ENCODE measurements at regions of chr1 and their contacts with region 1.

Region 1: GRCh38 chr1:205750138-205751035 is at the start of gene NUCKS1:
- DNase-seq: peak; percentile 97
- H3K4me3 Mint-ChIP-seq: peak within 1 kb of the TSS; percentile 87
- H3K27ac Mint-ChIP-seq: peak within 1 kb of the TSS; percentile 96
- H3K4me1 Mint-ChIP-seq: peaks cover 41% of the 10 kb centered on the region
- H3K27me3 Mint-ChIP-seq: no peaks in the 10 kb centered on the region
- total RNA-seq, gene NUCKS1: 163 to 185 TPM

Region 2: GRCh38 chr1:205554026-205554811 is 196.2 kb before region 1 on chr1:
- CTCF ChIA-PET with region 1: no interaction called
- POLR2A ChIA-PET with region 1: no interaction called
- DNase-seq: no peak
- H3K4me3 Mint-ChIP-seq: no peak overlapping the region
- H3K27ac Mint-ChIP-seq: no peak overlapping the region
- H3K4me1 Mint-ChIP-seq: no peaks in the 10 kb centered on the region
- H3K27me3 Mint-ChIP-seq: peaks cover 49% of the 10 kb centered on the region

Region 3: DNA sequence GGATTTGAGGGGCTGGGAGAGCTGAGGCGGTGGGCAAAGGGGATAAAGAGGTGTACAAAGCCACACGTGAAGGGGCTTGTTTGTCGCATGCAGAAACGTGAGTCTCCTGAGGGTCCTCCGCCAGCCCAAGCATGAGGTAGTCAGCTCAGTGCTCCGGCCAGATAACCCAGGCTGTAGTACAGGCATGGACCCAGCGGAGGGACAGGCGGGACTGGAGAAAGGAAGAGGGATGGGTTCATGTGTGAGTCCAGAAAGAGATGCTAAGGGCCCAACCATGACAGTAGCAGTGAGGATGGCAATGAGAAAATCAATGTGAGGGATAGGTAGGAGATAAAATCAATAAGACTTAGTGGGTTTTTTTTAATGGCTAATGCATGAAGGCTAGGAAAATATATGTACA is 104.9 kb before region 1 on chr1:
- CTCF ChIA-PET with region 1: no interaction called
- POLR2A ChIA-PET with region 1: no interaction called
- DNase-seq: no peak
- H3K4me3 Mint-ChIP-seq: no peak overlapping the region
- H3K27ac Mint-ChIP-seq: no peak overlapping the region
- H3K4me1 Mint-ChIP-seq: no peaks in the 10 kb centered on the region
- H3K27me3 Mint-ChIP-seq: peaks cover 4% of the 10 kb centered on the region

Region 4: GRCh38 chr1:205729945-205730610 is 20.3 kb before region 1 on chr1:
- CTCF ChIA-PET with region 1: interaction called, 3 read pairs
- POLR2A ChIA-PET with region 1: interaction called, 12 read pairs
- DNase-seq: no peak
- H3K4me3 Mint-ChIP-seq: no peak overlapping the region
- H3K27ac Mint-ChIP-seq: no peak overlapping the region
- H3K4me1 Mint-ChIP-seq: peaks cover 25% of the 10 kb centered on the region
- H3K27me3 Mint-ChIP-seq: no peaks in the 10 kb centered on the region

Region 5: GRCh38 chr1:205766038-205766437 is 15.7 kb after region 1 on chr1:
- CTCF ChIA-PET with region 1: interaction called, 3 read pairs
- POLR2A ChIA-PET with region 1: interaction called, 14 read pairs
- DNase-seq: no peak
- H3K4me3 Mint-ChIP-seq: no peak overlapping the region
- H3K27ac Mint-ChIP-seq: no peak overlapping the region
- H3K4me1 Mint-ChIP-seq: peaks cover 30% of the 10 kb centered on the region
- H3K27me3 Mint-ChIP-seq: no peaks in the 10 kb centered on the region